Activated T-helper 1 cell treated with anti-CD3 and anti-CD28 coated beads, Interleukin-12 subunit alpha, Interleukin-12 subunit beta, Interleukin-2, Interleukin-4 antibody, amounts not matched to agents 30 ng/mL and 10 ng/mL and 1 ng/mL, durations not matched to agents 14 hours and 24 hours and 36 hours (primary cell): ENCODE measurements at regions of chr21 and their contacts with region 1.

Region 1: DNA sequence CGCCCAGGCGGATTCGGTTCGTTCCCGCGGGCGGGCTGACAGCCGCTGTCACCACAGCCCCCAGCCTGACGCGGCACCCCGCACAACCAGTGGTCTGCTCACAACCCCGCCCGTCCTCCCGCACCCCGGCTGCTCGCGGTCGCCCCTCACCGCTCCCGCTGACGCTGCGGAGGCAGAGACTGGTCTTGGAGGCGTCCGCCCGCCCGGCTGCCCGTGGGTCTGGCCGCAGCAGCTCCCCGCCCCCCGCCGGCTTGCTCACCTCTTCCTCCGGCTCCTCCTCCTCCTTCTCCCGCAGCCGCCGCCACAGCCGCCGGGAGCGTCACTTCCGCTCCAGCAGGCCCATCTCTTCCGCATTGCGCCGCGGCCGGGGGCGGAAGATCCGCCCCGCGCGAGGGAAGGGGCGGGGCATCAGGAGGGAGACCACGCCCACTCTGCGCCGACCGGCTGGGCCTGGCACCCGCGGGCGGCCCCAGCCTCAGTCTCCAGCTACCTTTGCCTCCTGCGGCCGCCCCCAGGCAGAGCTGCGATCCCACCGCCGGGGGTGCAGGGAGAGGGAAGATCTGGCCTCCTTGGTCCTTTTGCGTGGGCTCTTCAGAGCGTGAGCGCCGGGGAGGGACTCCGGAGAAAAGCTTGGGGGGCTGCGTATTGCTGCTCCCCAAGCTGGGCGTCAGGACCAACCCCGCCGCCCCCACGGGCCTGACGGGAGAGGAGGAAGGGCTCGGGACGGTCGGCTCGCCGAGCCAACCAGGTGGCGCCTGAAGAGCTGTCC is at the start of gene SYNJ1:
- DNase-seq: peak; percentile 94
- H3K4me3 Mint-ChIP-seq: peak within 1 kb of the TSS; percentile 98
- H3K27ac Mint-ChIP-seq: peak within 1 kb of the TSS; percentile 96
- H3K4me1 Mint-ChIP-seq: peaks cover 48% of the 10 kb centered on the region
- H3K27me3 Mint-ChIP-seq: no peaks in the 10 kb centered on the region
- total RNA-seq, gene SYNJ1: 13.1 and 13.7 TPM in 2 replicates

Region 2: GRCh38 chr21:31659536-31660258 is 1068.2 kb before region 1 on chr21 and contains the start of gene SOD1:
- intact Hi-C with region 1: loop called (anchors 2 kb)
- DNase-seq: peak; percentile 96
- H3K4me3 Mint-ChIP-seq: peak within 1 kb of the TSS; percentile 99
- H3K27ac Mint-ChIP-seq: peak within 1 kb of the TSS; percentile 100
- H3K4me1 Mint-ChIP-seq: peaks cover 76% of the 10 kb centered on the region
- H3K27me3 Mint-ChIP-seq: no peaks in the 10 kb centered on the region
- total RNA-seq, gene SOD1: 346 and 354 TPM in 2 replicates

Region 3: GRCh38 chr21:32278518-32279376 is 449.1 kb before region 1 on chr21 and contains the start of gene MIS18A:
- intact Hi-C with region 1: loop called (anchors 2 kb)
- DNase-seq: peak; percentile 95
- H3K4me3 Mint-ChIP-seq: peak within 1 kb of the TSS; percentile 100
- H3K27ac Mint-ChIP-seq: peak within 1 kb of the TSS; percentile 97
- H3K4me1 Mint-ChIP-seq: peaks cover 21% of the 10 kb centered on the region
- H3K27me3 Mint-ChIP-seq: no peaks in the 10 kb centered on the region
- total RNA-seq, gene MIS18A: 26.8 and 27.5 TPM in 2 replicates

Region 4: GRCh38 chr21:32494934-32495703 is 232.8 kb before region 1 on chr21:
- intact Hi-C with region 1: loop called (anchors 5 kb)
- DNase-seq: no peak
- H3K4me3 Mint-ChIP-seq: no peak overlapping the region
- H3K27ac Mint-ChIP-seq: no peak overlapping the region
- H3K4me1 Mint-ChIP-seq: peaks cover 16% of the 10 kb centered on the region
- H3K27me3 Mint-ChIP-seq: no peaks in the 10 kb centered on the region

Region 5: DNA sequence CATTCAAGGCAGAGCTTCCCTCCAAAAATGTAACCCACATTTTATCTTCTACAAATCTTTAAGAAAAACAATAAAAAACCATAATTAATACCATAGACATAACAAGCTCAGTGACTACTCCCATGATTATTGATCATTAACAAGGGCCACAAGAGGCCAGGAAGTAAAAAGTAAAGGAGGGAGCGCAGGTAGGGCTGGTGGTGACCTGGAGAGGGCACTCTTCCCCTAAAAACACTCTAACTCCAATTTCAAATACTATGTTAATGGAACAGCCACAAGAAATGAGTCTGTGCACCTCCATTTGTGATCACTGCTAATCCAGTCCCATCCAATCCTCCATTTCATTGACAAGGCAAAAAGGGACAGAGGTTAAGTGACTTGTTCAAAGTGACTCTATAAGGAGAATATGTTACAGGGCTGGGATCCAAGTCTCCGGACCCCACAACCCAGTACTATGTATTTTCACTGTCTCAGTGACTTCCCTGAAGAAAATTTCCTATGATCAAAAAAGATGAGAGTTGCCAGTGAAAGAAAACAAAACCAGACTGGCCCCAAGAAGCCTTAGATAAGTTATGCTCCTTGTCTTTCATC is 74.5 kb before region 1 on chr21:
- intact Hi-C with region 1: loop called (anchors 1 kb)
- DNase-seq: no peak
- H3K4me3 Mint-ChIP-seq: no peak overlapping the region
- H3K27ac Mint-ChIP-seq: peak overlapping the region; percentile 5
- H3K4me1 Mint-ChIP-seq: peaks cover 9% of the 10 kb centered on the region
- H3K27me3 Mint-ChIP-seq: no peaks in the 10 kb centered on the region

Region 6: DNA sequence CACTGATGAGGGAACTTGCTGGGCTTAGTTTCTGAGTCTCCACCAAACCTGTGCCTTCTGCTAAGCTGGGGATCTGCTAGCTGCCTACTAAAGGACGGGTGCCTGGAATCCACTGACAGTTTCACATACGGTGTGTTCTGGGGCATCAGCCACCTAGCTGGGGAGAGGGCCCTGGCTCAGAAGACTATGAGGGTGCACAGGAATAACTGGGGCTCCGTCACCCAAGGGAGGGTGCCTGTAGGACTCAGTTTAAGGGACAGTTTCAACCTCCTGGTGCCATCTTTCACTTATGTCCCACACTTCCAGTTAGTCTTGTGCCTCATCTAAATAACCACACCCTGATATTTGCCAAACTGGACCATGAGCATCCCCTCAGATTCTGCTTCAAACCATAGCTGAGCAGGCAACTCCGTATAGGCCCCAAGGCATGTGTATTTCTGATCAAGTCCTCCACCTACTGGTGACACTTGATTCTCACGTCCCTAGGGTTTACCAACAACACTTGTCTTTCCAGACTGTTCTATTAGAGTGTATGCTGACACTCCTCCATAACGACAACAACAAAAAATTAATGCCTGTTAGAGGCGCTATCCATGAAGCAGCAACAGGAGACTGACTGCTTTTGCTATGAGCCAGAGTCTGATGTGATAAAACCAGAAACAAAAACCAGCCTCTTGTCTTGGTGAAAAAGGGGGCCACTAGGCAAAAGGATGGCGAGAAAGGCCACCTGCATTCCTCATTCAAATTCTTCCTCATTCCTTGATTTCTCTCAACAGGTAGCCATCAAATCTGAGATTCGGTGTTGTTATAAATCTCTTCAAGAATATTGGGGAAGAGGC is 98.7 kb after region 1 on chr21:
- intact Hi-C with region 1: loop called (anchors 1 kb)
- DNase-seq: peak; percentile 23
- H3K4me3 Mint-ChIP-seq: no peak overlapping the region
- H3K27ac Mint-ChIP-seq: no peak overlapping the region
- H3K4me1 Mint-ChIP-seq: no peaks in the 10 kb centered on the region
- H3K27me3 Mint-ChIP-seq: peaks cover 10% of the 10 kb centered on the region

Region 7: GRCh38 chr21:33542640-33543504 is 815.0 kb after region 1 on chr21 and contains the start of gene SON:
- intact Hi-C with region 1: loop called (anchors 2 kb)
- DNase-seq: peak; percentile 98
- H3K4me3 Mint-ChIP-seq: peak within 1 kb of the TSS; percentile 93
- H3K27ac Mint-ChIP-seq: peak within 1 kb of the TSS; percentile 99
- H3K4me1 Mint-ChIP-seq: peaks cover 43% of the 10 kb centered on the region
- H3K27me3 Mint-ChIP-seq: no peaks in the 10 kb centered on the region
- total RNA-seq, gene SON: 342 and 361 TPM in 2 replicates